Heart right ventricle (tissue), 16 donors: ENCODE measurements at regions of chr5 and their contacts with region 1.

Region 1: GRCh38 chr5:181181650-181182565 is 23.1 kb downstream of the TRIM7 start:
- DNase-seq: peak; percentile 68 to 69
- ATAC-seq: peak; percentile 67 to 87 (median 82)
- H3K4me3 ChIP-seq: no peak overlapping the region
- H3K27ac ChIP-seq: no peak overlapping the region
- H3K4me1 ChIP-seq: peaks cover 0 to 31% (median 16%) of the 10 kb centered on the region in 9 donors
- H3K27me3 ChIP-seq: peaks cover 0 to 10% (median 0%) of the 10 kb centered on the region in 7 donors
- CTCF ChIP-seq: peak; percentile 60 to 91 (median 79)

Region 2: GRCh38 chr5:181243512-181244343 is 61.8 kb after region 1 on chr5 and contains the start of gene RACK1:
- intact Hi-C with region 1: loop called in 1 of 10 experiments (anchors 10 kb)
- DNase-seq: peak; percentile 85 to 93
- ATAC-seq: peak; percentile 61 to 76 (median 70)
- H3K4me3 ChIP-seq: peak within 1 kb of the TSS; percentile 76 to 94 (median 80)
- H3K27ac ChIP-seq: peak within 1 kb of the TSS; percentile 66 to 99 (median 96)
- H3K4me1 ChIP-seq: peaks cover 23 to 77% (median 58%) of the 10 kb centered on the region in 9 donors
- H3K27me3 ChIP-seq: no peaks in the 10 kb centered on the region
- CTCF ChIP-seq: no peak
- total RNA-seq, gene RACK1: 581 to 916 (median 631) TPM

Region 3: GRCh38 chr5:181260387-181261319 is 78.7 kb after region 1 on chr5 and contains the start of gene TRIM52:
- intact Hi-C with region 1: loop called in 7 of 10 experiments (anchors 5 to 10 kb)
- DNase-seq: peak; percentile 93
- ATAC-seq: peak; percentile 90 to 97 (median 94)
- H3K4me3 ChIP-seq: peak within 1 kb of the TSS; percentile 73 to 99 (median 92)
- H3K27ac ChIP-seq: peak within 1 kb of the TSS; percentile 98 to 100 (median 100)
- H3K4me1 ChIP-seq: peaks cover 11 to 64% (median 51%) of the 10 kb centered on the region in 9 donors
- H3K27me3 ChIP-seq: no peaks in the 10 kb centered on the region
- CTCF ChIP-seq: peak in 1 of 9 donors; percentile 13
- total RNA-seq, gene TRIM52: 5.5 to 15.8 (median 7.5) TPM